ENCODE measurements at regions of chr22 and their contacts with region 1.

Region 1: GRCh38 chr22:30634471-30635233 is 929 bp upstream of the SLC35E4 start:
- DNase-seq: peak; percentile 93
- H3K4me3 ChIP-seq: peak overlapping the region; percentile 5 to 75 (median 53)
- H3K27ac ChIP-seq: peak overlapping the region; percentile 88 to 97 (median 89)
- H3K4me1 ChIP-seq: peaks cover 20 to 34% (median 31%) of the 10 kb centered on the region in 4 donors
- H3K27me3 ChIP-seq: no peaks in the 10 kb centered on the region
- CTCF ChIP-seq: peak; percentile 92 to 99 (median 98)
- EP300 ChIP-seq: no peak
- POLR2A ChIP-seq: no peak

Region 2: GRCh38 chr22:29750559-29751538 is 883.8 kb before region 1 on chr22:
- in situ Hi-C with region 1: no loop called
- intact Hi-C with region 1: no loop called
- DNase-seq: no peak
- H3K4me3 ChIP-seq: no peak overlapping the region
- H3K27ac ChIP-seq: no peak overlapping the region
- H3K4me1 ChIP-seq: no peaks in the 10 kb centered on the region
- H3K27me3 ChIP-seq: no peaks in the 10 kb centered on the region
- CTCF ChIP-seq: no peak
- EP300 ChIP-seq: no peak
- POLR2A ChIP-seq: no peak

Region 3: DNA sequence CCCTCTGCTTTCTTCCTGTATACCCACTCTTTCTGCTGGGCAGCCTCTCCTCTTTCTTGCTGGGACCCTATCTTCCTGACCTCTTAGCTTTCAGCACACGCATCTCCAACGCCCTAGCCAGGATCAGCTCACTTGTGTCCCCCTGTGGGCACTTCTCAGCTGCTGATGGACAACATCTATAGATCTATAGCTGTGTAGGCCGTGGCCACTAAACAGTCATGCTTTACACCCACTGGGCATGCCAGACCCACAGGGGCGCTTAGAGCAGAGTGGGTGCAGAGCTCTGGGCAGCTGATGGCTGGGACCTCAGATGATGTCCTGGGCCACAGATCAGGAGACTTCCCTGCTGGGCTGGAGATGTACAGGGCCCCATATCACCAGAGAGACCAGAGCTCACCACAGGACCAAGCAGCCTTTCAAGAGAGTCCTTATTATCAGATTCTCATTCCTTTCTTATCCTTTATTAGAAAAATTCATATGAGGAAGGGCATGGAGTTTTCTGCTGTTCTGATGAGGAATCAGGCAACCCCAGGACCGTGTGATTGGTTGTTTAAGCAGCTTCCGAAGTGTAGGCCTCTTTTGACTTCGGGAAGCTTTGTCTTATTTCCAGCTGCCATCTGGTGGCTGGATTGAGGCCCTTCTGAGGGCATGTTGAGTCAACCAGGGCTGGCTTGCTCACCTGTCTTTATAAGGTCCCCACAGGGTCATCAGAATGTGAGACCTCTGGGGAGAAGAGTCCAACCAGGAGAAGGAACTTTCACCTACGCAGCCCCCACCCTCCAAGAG is 120.5 kb after region 1 on chr22:
- in situ Hi-C with region 1: loop called (anchors 5 to 10 kb)
- intact Hi-C with region 1: loop called (anchors 1 kb)
- DNase-seq: peak; percentile 70
- H3K4me3 ChIP-seq: no peak overlapping the region
- H3K27ac ChIP-seq: no peak overlapping the region
- H3K4me1 ChIP-seq: no peaks in the 10 kb centered on the region
- H3K27me3 ChIP-seq: no peaks in the 10 kb centered on the region
- CTCF ChIP-seq: peak; percentile 64 to 83 (median 67)
- EP300 ChIP-seq: no peak
- POLR2A ChIP-seq: no peak

Region 4: GRCh38 chr22:30781271-30781875 is 146.7 kb after region 1 on chr22:
- in situ Hi-C with region 1: no loop called
- intact Hi-C with region 1: no loop called
- DNase-seq: no peak
- H3K4me3 ChIP-seq: no peak overlapping the region
- H3K27ac ChIP-seq: no peak overlapping the region
- H3K4me1 ChIP-seq: no peaks in the 10 kb centered on the region
- H3K27me3 ChIP-seq: no peaks in the 10 kb centered on the region
- CTCF ChIP-seq: no peak
- EP300 ChIP-seq: no peak
- POLR2A ChIP-seq: no peak

Region 5: GRCh38 chr22:30910358-30910757 is 275.7 kb after region 1 on chr22:
- in situ Hi-C with region 1: loop called in 2 of 4 experiments (anchors 10 to 25 kb)
- intact Hi-C with region 1: loop called (anchors 10 kb)
- DNase-seq: no peak
- H3K4me3 ChIP-seq: no peak overlapping the region
- H3K27ac ChIP-seq: no peak overlapping the region
- H3K4me1 ChIP-seq: no peaks in the 10 kb centered on the region
- H3K27me3 ChIP-seq: no peaks in the 10 kb centered on the region
- CTCF ChIP-seq: no peak
- EP300 ChIP-seq: no peak
- POLR2A ChIP-seq: no peak

Region 6: GRCh38 chr22:30920407-30920806 is 285.8 kb after region 1 on chr22:
- in situ Hi-C with region 1: loop called in 2 of 4 experiments (anchors 10 to 25 kb)
- intact Hi-C with region 1: no loop called
- DNase-seq: peak; percentile 80
- H3K4me3 ChIP-seq: no peak overlapping the region
- H3K27ac ChIP-seq: no peak overlapping the region
- H3K4me1 ChIP-seq: peaks cover 0 to 15% (median 6%) of the 10 kb centered on the region in 4 donors
- H3K27me3 ChIP-seq: no peaks in the 10 kb centered on the region
- CTCF ChIP-seq: peak; percentile 83 to 93 (median 90)
- EP300 ChIP-seq: no peak
- POLR2A ChIP-seq: no peak

Measured in transverse colon (tissue), 4 donors.